Activated CD4-positive, alpha-beta memory T cell treated with anti-CD3 and anti-CD28 coated beads, Interleukin-2, amount 10 ng/mL, durations not matched to agents 7 days and 5 days (primary cell): ENCODE measurements at regions of chr1 and their contacts with region 1.

Region 1: GRCh38 chr1:146007506-146008133 is 11.2 kb upstream of the TXNIP start:
- DNase-seq: no peak
- H3K4me3 Mint-ChIP-seq: peak overlapping the region; percentile 55
- H3K27ac Mint-ChIP-seq: peak overlapping the region; percentile 87
- H3K4me1 Mint-ChIP-seq: peaks cover 36% of the 10 kb centered on the region
- H3K27me3 Mint-ChIP-seq: no peaks in the 10 kb centered on the region

Region 2: GRCh38 chr1:145868232-145868631 is 139.4 kb before region 1 on chr1:
- CTCF ChIA-PET with region 1: no interaction called
- POLR2A ChIA-PET with region 1: no interaction called
- DNase-seq: no peak
- H3K4me3 Mint-ChIP-seq: no peak overlapping the region
- H3K27ac Mint-ChIP-seq: no peak overlapping the region
- H3K4me1 Mint-ChIP-seq: peaks cover 17% of the 10 kb centered on the region
- H3K27me3 Mint-ChIP-seq: peaks cover 48% of the 10 kb centered on the region

Region 3: DNA sequence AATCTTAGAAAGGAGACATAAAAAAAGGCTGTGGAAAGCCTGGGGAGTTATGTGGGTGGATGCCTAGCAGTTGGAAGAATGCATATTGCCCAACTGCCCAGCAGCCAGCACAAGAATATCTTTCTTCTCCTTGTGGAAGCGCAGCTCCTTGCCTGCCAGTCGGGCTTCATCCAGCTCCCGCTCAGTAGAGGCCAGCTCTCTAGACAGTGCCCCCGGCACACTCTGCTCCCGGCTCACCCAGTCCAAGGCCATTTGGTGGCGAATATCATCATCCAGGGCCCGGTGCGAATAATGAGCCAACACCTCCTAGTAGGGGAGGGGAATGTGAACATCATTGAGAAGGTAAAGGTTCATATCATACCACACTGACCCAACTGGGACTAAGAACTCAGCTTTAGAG is 71.4 kb before region 1 on chr1:
- CTCF ChIA-PET with region 1: no interaction called
- POLR2A ChIA-PET with region 1: no interaction called
- DNase-seq: no peak
- H3K4me3 Mint-ChIP-seq: no peak overlapping the region
- H3K27ac Mint-ChIP-seq: no peak overlapping the region
- H3K4me1 Mint-ChIP-seq: peaks cover 23% of the 10 kb centered on the region
- H3K27me3 Mint-ChIP-seq: no peaks in the 10 kb centered on the region

Region 4: DNA sequence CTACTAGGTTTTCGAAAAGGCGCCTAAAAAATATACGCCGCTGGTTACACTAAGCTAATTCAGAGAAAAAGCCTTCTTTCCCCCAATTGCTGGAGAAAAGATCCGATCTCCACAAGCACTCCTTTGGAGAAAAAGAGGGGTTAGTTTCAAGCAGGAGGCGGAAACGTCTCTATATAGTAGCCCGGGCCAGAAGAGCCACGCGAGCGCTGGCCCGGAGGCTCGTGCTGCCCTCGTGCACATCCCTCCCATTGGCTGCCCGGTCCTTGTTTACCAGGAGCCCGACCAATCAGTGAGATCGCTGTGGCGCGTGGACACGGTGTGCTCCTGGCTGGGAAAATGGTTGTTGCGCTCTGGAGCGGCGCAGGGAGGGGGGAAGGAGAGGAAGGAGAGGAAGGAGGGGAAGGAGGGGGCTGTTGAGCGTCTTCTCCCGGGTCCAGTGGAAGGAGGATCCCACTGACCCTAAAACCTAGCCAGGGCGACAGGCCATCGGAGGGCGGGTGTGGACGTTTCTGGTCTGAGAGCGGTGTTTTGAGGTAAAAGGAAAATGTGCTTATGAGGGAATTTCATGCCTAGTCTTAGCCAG is 11.1 kb before region 1 on chr1 and contains the start of gene TXNIP:
- CTCF ChIA-PET with region 1: interaction called, 30 read pairs
- POLR2A ChIA-PET with region 1: interaction called, 146 read pairs
- DNase-seq: peak; percentile 96
- H3K4me3 Mint-ChIP-seq: peak within 1 kb of the TSS; percentile 93
- H3K27ac Mint-ChIP-seq: peak within 1 kb of the TSS; percentile 97
- H3K4me1 Mint-ChIP-seq: peaks cover 63% of the 10 kb centered on the region
- H3K27me3 Mint-ChIP-seq: no peaks in the 10 kb centered on the region
- total RNA-seq, gene TXNIP: 397 to 407 TPM